RWPE1 (cell line): ENCODE measurements at regions of chr18 and their contacts with region 1.

Region 1: GRCh38 chr18:23703057-23703986 is 14.1 kb downstream of the LAMA3 start:
- DNase-seq: peak; percentile 42
- H3K27ac ChIP-seq: no peak overlapping the region
- CTCF ChIP-seq: peak; percentile 58

Region 2: GRCh38 chr18:23619388-23619881 is 83.9 kb before region 1 on chr18:
- CTCF ChIA-PET with region 1: interaction called, 14 read pairs
- POLR2A ChIA-PET with region 1: no interaction called
- DNase-seq: no peak
- H3K27ac ChIP-seq: no peak overlapping the region
- CTCF ChIP-seq: no peak